WTC11 (cell line): ENCODE measurements at regions of chr3 and their contacts with region 1.

Region 1: GRCh38 chr3:184561061-184561912 is at the start of gene EPHB3:
- DNase-seq: peak; percentile 99
- ATAC-seq: peak; percentile 90
- H3K4me3 Mint-ChIP-seq: peak within 1 kb of the TSS; percentile 71
- H3K27ac Mint-ChIP-seq: no peak within 1 kb of the TSS
- H3K4me1 Mint-ChIP-seq: peaks cover 61% of the 10 kb centered on the region
- H3K27me3 Mint-ChIP-seq: peaks cover 87% of the 10 kb centered on the region
- CTCF ChIP-seq: peak; percentile 93
- total RNA-seq, gene EPHB3: 5.3 to 11.4 TPM (median 6.3 TPM) in 3 replicates

Region 2: DNA sequence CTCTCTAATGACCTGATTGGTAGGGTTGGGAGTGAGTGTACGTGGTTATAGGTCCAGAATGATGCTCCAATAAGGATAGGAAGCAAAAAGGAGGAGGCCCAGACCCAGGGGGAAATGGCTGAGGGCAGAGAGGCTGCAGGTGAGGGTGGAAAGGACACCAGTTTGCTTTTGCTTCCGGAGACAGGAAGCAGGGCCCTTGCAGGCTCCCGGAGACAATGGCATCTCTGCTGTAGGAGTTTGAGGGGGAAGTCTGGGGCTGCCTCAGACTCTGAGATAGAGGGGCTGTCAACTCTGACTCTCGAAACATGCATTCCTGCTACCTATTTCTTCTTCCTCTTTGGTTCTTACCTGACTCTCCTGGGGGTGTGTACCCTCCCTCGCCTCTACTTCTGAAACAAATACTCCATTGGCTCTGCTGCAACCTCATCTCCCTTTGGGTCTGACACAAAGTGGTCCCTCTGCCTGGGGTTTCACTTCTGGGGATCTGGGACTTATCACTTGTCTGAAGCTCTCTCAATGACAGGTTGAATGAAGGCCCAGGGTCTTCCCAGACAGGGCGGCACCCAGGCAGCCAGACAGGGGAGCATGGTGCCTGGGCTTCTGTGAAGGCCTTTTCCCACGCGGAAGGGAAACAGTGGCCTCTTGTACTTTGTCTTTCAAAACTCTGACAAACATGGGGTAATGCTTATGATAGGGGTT is 119.9 kb before region 1 on chr3:
- CTCF ChIA-PET with region 1: no interaction called
- POLR2A ChIA-PET with region 1: no interaction called
- DNase-seq: no peak
- ATAC-seq: peak; percentile 51
- H3K4me3 Mint-ChIP-seq: no peak overlapping the region
- H3K27ac Mint-ChIP-seq: peak overlapping the region; percentile 42; the same call in 1 of the 2 replicates
- H3K4me1 Mint-ChIP-seq: peaks cover 8% of the 10 kb centered on the region
- H3K27me3 Mint-ChIP-seq: no peaks in the 10 kb centered on the region
- CTCF ChIP-seq: no peak

Region 3: GRCh38 chr3:184583578-184584425 is 22.5 kb after region 1 on chr3:
- CTCF ChIA-PET with region 1: interaction called, 27 read pairs
- POLR2A ChIA-PET with region 1: interaction called, 4 read pairs
- DNase-seq: peak; percentile 64
- ATAC-seq: peak; percentile 51
- H3K4me3 Mint-ChIP-seq: peak overlapping the region; percentile 65
- H3K27ac Mint-ChIP-seq: no peak overlapping the region
- H3K4me1 Mint-ChIP-seq: peaks cover 25% of the 10 kb centered on the region
- H3K27me3 Mint-ChIP-seq: peaks cover 40% of the 10 kb centered on the region
- CTCF ChIP-seq: no peak

Region 4: GRCh38 chr3:184648636-184649035 is 87.3 kb after region 1 on chr3:
- CTCF ChIA-PET with region 1: no interaction called
- POLR2A ChIA-PET with region 1: no interaction called
- DNase-seq: no peak
- ATAC-seq: no peak; the same call in 1 of the 2 replicates
- H3K4me3 Mint-ChIP-seq: no peak overlapping the region
- H3K27ac Mint-ChIP-seq: no peak overlapping the region
- H3K4me1 Mint-ChIP-seq: peaks cover 21% of the 10 kb centered on the region
- H3K27me3 Mint-ChIP-seq: no peaks in the 10 kb centered on the region; the same call in 1 of the 2 replicates
- CTCF ChIP-seq: no peak

Region 5: GRCh38 chr3:184679056-184679816 is 117.9 kb after region 1 on chr3:
- CTCF ChIA-PET with region 1: interaction called, 21 read pairs
- POLR2A ChIA-PET with region 1: no interaction called
- DNase-seq: peak; percentile 65
- ATAC-seq: peak; percentile 88
- H3K4me3 Mint-ChIP-seq: peak overlapping the region; percentile 45
- H3K27ac Mint-ChIP-seq: peak overlapping the region; percentile 53; the same call in 1 of the 2 replicates
- H3K4me1 Mint-ChIP-seq: peaks cover 23% of the 10 kb centered on the region
- H3K27me3 Mint-ChIP-seq: no peaks in the 10 kb centered on the region
- CTCF ChIP-seq: no peak

Region 6: GRCh38 chr3:184737641-184738535 is 176.6 kb after region 1 on chr3:
- CTCF ChIA-PET with region 1: interaction called, 39 read pairs
- POLR2A ChIA-PET with region 1: no interaction called
- DNase-seq: no peak
- ATAC-seq: no peak
- H3K4me3 Mint-ChIP-seq: no peak overlapping the region
- H3K27ac Mint-ChIP-seq: no peak overlapping the region
- H3K4me1 Mint-ChIP-seq: peaks cover 14% of the 10 kb centered on the region
- H3K27me3 Mint-ChIP-seq: no peaks in the 10 kb centered on the region
- CTCF ChIP-seq: no peak

Region 7: DNA sequence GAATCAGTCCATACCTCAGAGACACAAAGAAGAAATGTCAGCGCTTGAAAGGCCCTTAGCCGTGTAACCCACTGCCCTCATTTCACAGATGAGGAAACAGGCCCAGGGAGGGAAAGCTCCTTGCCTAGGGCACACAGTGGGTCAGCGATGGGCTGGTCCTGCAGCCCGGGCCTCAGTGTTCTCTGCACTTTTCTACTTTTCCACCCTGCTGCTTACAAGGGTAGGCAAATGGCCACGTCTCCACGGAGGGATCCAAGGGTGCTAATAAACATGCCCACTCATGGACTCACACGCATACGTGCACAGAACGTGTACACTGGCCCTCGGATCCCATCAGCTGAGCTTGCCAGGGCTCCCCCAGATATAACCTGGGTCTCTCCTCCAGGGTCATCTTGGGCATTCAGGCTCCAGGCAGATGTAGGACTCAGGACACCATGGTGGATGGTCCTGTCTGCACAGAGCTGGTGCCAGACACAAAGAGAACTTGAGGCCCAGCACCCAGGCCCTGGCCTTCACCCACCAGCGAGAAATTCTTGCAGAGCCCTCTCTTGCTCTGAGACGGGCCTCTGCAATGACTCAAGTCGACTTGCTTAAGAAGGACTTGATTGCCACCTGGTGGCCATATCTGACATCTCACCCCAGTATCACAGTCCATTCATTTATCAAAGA is 216.2 kb after region 1 on chr3:
- CTCF ChIA-PET with region 1: interaction called, 13 read pairs
- POLR2A ChIA-PET with region 1: interaction called, 7 read pairs
- DNase-seq: peak; percentile 93
- ATAC-seq: peak; percentile 81
- H3K4me3 Mint-ChIP-seq: no peak overlapping the region
- H3K27ac Mint-ChIP-seq: no peak overlapping the region
- H3K4me1 Mint-ChIP-seq: peaks cover 43% of the 10 kb centered on the region
- H3K27me3 Mint-ChIP-seq: no peaks in the 10 kb centered on the region; the same call in none of the 2 replicates
- CTCF ChIP-seq: peak; percentile 74

Region 8: GRCh38 chr3:184811999-184812661 is 250.8 kb after region 1 on chr3 and contains the start of gene VPS8:
- CTCF ChIA-PET with region 1: interaction called, 14 read pairs
- POLR2A ChIA-PET with region 1: no interaction called
- DNase-seq: peak; percentile 96
- ATAC-seq: peak; percentile 95
- H3K4me3 Mint-ChIP-seq: peak within 1 kb of the TSS; percentile 99
- H3K27ac Mint-ChIP-seq: peak within 1 kb of the TSS; percentile 89
- H3K4me1 Mint-ChIP-seq: peaks cover 11% of the 10 kb centered on the region
- H3K27me3 Mint-ChIP-seq: no peaks in the 10 kb centered on the region
- CTCF ChIP-seq: peak; percentile 56
- total RNA-seq, gene VPS8: 44.9 to 49.5 TPM (median 46.1 TPM) in 3 replicates

Region 9: DNA sequence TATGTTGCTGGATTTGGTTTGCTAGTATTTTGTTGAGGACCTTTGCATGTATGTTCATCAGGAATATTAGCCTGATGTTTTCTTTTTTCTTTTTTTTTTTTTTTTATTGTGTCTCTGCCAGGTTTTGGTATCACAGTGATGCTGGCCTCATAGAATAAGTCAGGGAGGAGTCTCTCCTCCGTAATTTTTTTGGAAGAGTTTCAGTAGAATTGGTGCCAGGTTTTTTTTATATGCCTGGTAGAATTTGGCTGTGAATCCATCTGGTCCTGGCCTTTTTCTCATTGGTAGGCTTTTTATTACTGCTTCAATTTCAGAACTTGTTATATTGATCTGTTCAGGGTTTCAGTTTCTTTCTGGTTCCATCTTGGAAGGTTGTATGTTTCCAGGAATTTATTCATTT is 416.5 kb after region 1 on chr3:
- CTCF ChIA-PET with region 1: no interaction called
- POLR2A ChIA-PET with region 1: no interaction called
- DNase-seq: no peak
- ATAC-seq: no peak
- H3K4me3 Mint-ChIP-seq: no peak overlapping the region
- H3K27ac Mint-ChIP-seq: no peak overlapping the region
- H3K4me1 Mint-ChIP-seq: peaks cover 5% of the 10 kb centered on the region
- H3K27me3 Mint-ChIP-seq: no peaks in the 10 kb centered on the region
- CTCF ChIP-seq: no peak